Lower leg skin (tissue), 4 donors: ENCODE measurements at regions of chr2 and their contacts with region 1.

Region 1: GRCh38 chr2:228493852-228494251 is 312.4 kb upstream of the SPHKAP start:
- DNase-seq: no peak
- H3K4me3 ChIP-seq: no peak overlapping the region
- CTCF ChIP-seq: no peak
- POLR2A ChIP-seq: no peak

Region 2: DNA sequence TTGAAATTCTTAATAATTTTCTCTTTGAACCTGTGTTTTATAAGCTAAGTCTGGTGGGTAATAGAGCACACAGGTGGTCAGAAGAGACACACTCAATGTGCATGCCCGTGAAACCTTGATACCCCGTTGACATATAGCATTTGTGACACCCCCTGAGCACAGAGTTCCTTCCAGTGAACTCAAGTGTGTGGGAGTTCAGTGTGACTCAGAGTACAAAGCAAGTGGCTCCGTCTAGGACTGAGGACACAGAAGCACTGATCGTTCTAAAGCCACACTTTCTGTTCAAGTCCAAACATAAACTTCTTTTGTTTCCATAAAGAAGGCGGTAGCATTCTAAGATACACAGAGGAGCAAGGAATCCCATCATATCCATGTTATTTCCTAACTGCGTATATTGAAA is 253.6 kb after region 1 on chr2:
- intact Hi-C with region 1: no loop called
- DNase-seq: no peak
- H3K4me3 ChIP-seq: no peak overlapping the region
- CTCF ChIP-seq: no peak
- POLR2A ChIP-seq: no peak

Region 3: DNA sequence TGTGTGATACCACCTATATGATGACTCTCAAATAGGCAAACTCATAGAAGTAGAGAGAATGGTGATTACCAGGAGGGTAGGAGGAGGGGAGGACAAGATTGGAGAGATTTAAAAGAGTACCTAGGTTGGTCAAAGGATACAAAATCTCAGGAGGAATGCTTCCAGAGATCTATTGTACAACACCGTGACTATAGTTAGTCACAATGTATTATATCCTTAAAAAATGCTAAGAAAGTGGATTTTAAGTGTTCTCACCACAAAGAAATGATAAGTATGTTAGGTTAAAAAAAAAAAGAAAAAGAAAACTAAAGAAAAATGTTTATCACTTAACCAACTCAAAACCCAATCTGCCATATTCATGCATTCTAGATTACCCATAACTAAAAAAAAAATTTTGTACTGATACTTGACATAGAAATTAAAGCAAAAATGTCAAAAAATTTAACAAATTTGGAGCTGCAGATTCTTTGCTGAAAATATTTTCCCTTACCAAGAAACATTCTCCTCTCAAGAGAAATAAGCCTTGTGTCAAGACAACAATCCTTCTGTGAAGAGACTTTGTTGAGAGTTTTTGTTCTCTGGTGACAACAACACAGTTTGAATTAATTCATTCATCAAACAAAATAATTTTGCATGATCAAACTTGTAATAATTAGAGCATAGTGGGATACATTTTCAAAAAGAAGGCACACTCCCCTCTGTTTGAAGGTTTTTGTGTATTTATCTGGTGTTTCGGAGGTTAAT is 1007.4 kb after region 1 on chr2:
- intact Hi-C with region 1: loop called (anchors 5 kb)
- DNase-seq: no peak
- H3K4me3 ChIP-seq: no peak overlapping the region
- CTCF ChIP-seq: no peak
- POLR2A ChIP-seq: no peak